Uterus (tissue), 4 donors: ENCODE measurements at regions of chr15 and their contacts with region 1.

Region 1: GRCh38 chr15:68252925-68253534 is 23.5 kb upstream of the CLN6 start:
- DNase-seq: peak in 1 of 2 donors; percentile 62
- H3K4me3 ChIP-seq: no peak overlapping the region
- H3K27ac ChIP-seq: peak overlapping the region in 1 of 2 donors; percentile 3
- H3K4me1 ChIP-seq: no peaks in the 10 kb centered on the region
- H3K27me3 ChIP-seq: no peaks in the 10 kb centered on the region
- CTCF ChIP-seq: peak; percentile 84 to 94 (median 88)
- POLR2A ChIP-seq: no peak

Region 2: DNA sequence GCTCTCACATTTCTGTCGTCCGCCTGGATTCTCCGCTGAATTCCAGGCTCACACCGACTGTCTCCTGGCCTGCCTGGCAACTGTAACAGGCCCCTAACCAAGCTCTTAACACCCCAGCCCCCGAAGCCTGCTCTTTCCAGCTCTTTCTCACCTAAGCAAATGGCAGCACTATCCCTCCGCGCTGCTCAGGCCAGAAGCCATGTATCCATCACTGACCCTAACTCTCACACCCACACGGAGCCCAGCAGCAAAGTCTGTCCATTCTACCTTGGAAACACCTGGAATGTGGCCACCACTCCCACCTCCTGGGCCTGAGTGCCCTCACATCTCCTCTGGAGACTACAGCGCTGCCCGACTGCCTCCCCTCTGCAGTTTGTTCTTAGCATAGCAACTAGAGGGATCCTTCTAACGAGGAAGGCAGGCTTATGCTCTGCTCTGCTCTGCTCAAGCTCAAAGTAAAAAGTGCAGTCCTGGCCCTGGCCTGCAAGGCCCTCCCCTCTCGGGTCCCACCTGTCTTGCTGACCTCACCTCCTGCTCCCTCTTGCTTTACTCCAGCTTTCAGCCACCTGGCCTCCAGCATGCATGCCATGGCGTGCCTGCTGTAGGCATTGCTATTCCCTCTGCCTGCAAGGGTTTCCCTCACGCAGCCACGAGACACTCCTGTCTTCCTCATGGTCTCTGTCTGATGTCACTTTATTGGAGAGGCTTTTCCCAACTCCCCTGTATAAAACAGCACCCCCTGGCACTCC is 51.7 kb after region 1 on chr15:
- intact Hi-C with region 1: loop called (anchors 10 kb)
- DNase-seq: peak; percentile 13 to 23
- H3K4me3 ChIP-seq: no peak overlapping the region
- H3K27ac ChIP-seq: peak overlapping the region; percentile 55 to 70
- H3K4me1 ChIP-seq: peaks cover 0 to 5% of the 10 kb centered on the region in 2 donors
- H3K27me3 ChIP-seq: no peaks in the 10 kb centered on the region
- CTCF ChIP-seq: no peak
- POLR2A ChIP-seq: no peak